ENCODE measurements at regions of chr16 and their contacts with region 1.

Region 1: GRCh38 chr16:85172455-85173145 is 60.3 kb upstream of the CIBAR2 start:
- DNase-seq: peak in 1 of 2 donors; percentile 47
- ATAC-seq: peak in 7 of 8 donors; percentile 16 to 56 (median 51)
- H3K4me3 ChIP-seq: peak overlapping the region in 9 of 10 donors; percentile 21 to 58 (median 37)
- H3K27ac ChIP-seq: peak overlapping the region in 8 of 10 donors; percentile 14 to 57 (median 28)
- H3K4me1 ChIP-seq: peaks cover 5 to 86% (median 78%) of the 10 kb centered on the region in 9 donors
- H3K27me3 ChIP-seq: peaks cover 0 to 56% (median 0%) of the 10 kb centered on the region in 7 donors
- CTCF ChIP-seq: peak in 7 of 9 donors; percentile 35 to 62 (median 43)

Region 2: DNA sequence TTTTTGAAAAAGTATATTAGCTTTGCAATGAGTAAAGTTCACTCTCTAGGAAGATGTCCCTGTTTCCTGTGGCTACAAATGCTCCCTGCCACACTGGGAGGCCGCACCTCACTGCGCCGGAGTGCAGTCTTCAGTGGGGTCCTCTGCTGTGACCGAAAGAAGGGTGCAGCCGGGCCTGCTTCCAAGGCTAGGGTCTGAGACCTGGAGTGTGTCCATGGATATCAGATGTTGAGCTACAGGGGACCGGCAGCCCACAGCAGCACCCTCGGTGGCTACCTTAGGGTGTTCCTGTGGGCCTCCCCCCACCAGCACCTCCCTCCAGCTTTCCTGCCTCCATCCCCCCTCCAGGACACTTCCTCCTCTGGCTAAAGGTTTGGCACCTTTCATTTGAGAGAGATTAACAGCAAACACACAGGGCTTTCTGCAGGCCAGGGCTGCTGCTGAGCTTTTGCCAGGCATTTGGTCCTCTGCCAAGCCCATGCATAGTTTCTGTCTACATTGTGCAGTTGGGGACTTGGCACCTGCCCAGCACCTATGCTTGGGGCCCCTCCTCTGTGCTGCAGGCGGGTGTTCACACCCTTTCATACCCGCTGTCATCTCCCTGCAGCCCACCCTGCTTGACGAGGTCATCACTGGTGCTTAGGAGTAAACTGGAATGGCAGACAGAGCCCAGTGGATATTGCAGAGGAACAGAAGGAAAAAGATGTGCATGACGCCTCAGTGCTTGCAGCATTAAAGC is 386.6 kb before region 1 on chr16:
- intact Hi-C with region 1: no loop called
- DNase-seq: peak; percentile 40 to 44
- ATAC-seq: peak; percentile 22 to 80 (median 53)
- H3K4me3 ChIP-seq: no peak overlapping the region
- H3K27ac ChIP-seq: no peak overlapping the region
- H3K4me1 ChIP-seq: peaks cover 3 to 26% (median 16%) of the 10 kb centered on the region in 9 donors
- H3K27me3 ChIP-seq: no peaks in the 10 kb centered on the region
- CTCF ChIP-seq: no peak

Region 3: DNA sequence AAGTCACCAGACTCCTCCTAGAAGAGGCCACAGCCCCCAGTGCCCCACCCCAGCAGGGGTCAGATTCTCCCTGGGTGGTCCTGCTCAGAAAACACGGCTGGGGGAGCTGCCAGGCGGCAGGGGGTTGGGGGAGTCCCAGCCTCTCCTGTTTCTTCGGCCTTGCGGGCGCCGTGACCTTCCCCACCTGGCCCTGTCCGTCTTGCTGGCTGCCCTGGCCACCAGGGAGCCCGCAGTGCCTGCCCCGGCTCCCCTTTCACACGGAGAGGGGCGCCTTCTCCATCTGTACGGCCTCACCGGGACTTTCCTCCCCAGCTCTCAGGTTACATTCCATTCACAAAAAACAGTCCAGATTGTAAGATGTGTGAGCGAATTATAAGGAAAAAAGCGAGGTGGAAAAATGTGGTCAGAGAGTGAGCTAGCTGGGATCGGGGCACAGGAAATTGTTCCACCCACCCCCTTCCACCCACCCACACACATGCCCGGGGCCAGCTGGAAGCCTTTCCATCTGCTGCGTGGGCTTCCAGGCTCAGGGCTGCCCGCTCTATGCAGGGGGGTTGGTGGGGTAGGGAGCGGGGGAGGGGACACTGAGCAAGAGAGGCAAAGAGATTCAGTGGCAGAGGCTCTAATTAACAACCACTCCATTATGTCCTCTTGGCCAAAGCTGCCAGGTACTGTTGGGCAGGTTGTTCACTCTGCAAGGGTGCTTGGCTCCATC is 45.7 kb before region 1 on chr16:
- intact Hi-C with region 1: loop called in 4 of 10 experiments (anchors 5 to 10 kb)
- DNase-seq: no peak
- ATAC-seq: peak in 6 of 8 donors; percentile 16 to 44 (median 28)
- H3K4me3 ChIP-seq: no peak overlapping the region
- H3K27ac ChIP-seq: peak overlapping the region in 6 of 10 donors; percentile 46 to 86 (median 61)
- H3K4me1 ChIP-seq: peaks cover 28 to 68% (median 54%) of the 10 kb centered on the region in 9 donors
- H3K27me3 ChIP-seq: no peaks in the 10 kb centered on the region
- CTCF ChIP-seq: no peak

Region 4: DNA sequence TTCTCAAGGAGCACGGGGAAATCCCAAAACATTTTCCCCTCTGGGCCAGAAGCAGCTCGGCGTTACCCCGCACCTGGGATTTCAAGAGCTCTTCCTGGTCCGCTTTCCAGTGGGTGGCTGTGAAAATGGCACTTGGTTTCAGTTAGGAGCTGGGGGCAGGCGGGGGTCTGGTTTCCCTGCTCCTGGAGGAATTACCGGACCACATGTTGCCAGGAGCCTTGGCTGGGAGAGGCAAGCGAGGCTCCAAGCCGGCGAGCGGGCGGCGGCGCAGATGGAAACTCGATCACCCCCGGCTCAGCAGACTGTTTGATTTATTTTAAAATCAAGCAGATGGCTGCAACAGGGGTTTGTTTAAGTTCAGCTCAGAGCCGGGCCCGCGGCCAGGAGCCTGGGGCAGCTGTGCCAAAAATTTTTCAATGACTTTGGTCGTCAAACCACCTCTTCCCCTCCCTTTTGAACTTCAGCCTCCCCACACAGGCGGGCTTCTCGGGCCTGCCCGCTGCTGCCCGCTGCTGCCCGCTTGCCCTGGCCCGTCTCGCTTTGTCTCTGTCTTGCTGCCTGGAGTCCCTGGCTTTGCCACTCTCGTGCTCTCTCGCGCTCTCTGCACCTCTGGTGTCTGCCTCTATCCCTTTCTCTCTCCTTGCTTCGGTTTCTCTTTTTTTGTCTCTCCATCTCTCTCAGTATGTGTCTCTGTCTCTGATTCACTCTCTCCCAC is 47.7 kb after region 1 on chr16:
- intact Hi-C with region 1: loop called in 3 of 10 experiments (anchors 5 to 10 kb)
- DNase-seq: peak; percentile 85
- ATAC-seq: peak; percentile 79 to 90 (median 86)
- H3K4me3 ChIP-seq: peak overlapping the region in 9 of 10 donors; percentile 12 to 45 (median 37)
- H3K27ac ChIP-seq: peak overlapping the region in 9 of 10 donors; percentile 21 to 79 (median 62)
- H3K4me1 ChIP-seq: peaks cover 8 to 26% (median 14%) of the 10 kb centered on the region in 9 donors
- H3K27me3 ChIP-seq: no peaks in the 10 kb centered on the region
- CTCF ChIP-seq: peak in 6 of 9 donors; percentile 8 to 41 (median 18)